ENCODE measurements at regions of chr12 and their contacts with region 1.

Region 1: DNA sequence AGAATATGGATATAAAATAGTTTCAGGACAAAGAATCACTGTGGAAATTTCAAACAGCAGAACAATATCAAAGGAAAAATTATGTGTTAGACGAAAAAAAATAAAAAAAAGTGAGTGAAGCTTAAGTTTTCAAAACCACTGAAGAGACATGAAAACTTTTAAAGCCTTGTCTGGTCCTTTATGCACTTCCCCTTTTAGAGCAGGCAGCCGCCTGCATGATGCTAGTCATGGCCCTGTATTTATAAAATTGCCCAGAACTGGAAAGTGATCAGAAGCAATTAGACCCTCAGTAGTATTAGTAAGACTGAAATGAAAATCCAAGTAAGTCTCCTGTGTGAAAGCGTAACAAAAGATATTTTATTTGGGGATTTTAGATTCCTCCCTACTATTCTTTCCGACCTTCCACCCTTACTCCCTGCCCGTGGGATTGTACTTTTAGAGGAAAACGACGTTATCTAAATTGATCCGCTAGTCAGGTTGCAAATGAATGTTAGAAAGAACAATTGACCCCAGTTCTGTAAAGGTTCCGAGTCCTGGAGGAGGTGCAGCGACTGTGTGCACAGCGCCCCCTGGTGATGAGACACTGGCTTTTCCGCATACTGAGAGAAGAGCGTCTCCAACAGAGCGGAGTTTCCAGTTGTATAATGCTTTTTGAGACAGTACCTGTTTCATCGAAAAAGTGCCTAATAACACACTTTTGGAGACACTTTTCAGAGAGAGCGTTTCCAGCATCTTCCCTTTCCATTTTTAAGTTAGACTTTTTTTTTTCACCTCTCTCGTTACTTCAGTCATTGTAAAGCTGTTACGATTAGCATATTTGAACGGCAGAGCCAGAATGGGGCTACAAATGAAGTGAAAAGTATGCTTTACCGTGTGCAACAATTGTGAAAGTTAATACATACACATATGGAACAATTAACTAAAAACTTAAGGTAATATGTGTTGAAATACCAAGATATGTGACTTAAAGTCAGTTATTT is 12.4 kb downstream of the MGST1 start:
- DNase-seq: peak; percentile 76

Region 2: GRCh38 chr12:15982471-15982870 is 377.3 kb before region 1 on chr12:
- in situ Hi-C with region 1: no loop called
- DNase-seq: peak; percentile 44

Region 3: GRCh38 chr12:16165506-16165905 is 194.3 kb before region 1 on chr12:
- in situ Hi-C with region 1: loop called (anchors 25 kb)
- DNase-seq: peak; percentile 68

Region 4: DNA sequence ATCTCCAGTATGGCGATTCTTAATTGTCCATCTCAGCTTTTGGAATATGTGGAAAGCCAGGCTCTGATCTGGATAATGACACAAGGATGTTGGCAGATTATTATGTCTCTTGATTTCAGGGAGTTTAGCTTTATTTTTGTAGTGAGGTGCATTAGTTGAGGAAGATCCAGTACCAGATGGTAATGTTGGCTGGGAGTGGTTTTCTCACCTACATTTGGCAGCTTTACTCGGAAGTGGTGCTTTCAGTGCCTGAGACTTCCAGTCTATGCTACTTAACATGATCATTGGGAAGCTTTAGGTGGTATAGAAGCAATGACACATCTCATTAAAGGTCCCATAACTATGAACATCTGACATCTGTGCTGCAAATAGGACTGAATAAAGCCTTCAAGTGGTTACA is 89.9 kb before region 1 on chr12:
- in situ Hi-C with region 1: no loop called
- DNase-seq: no peak